ENCODE measurements at regions of chr1 and their contacts with region 1.

Region 1: GRCh38 chr1:165768513-165769394 is at the start of gene TMCO1:
- DNase-seq: peak; percentile 98
- H3K4me3 Mint-ChIP-seq: peak within 1 kb of the TSS; percentile 98
- H3K27ac Mint-ChIP-seq: peak within 1 kb of the TSS; percentile 100
- H3K4me1 Mint-ChIP-seq: peaks cover 41% of the 10 kb centered on the region
- H3K27me3 Mint-ChIP-seq: no peaks in the 10 kb centered on the region
- total RNA-seq, gene TMCO1: 91.8 and 94.3 TPM in 2 replicates

Region 2: GRCh38 chr1:165697881-165698760 is 70.6 kb before region 1 on chr1 and contains the start of gene ALDH9A1:
- intact Hi-C with region 1: loop called (anchors 2 kb)
- DNase-seq: peak; percentile 96
- H3K4me3 Mint-ChIP-seq: peak within 1 kb of the TSS; percentile 91
- H3K27ac Mint-ChIP-seq: peak within 1 kb of the TSS; percentile 96
- H3K4me1 Mint-ChIP-seq: peaks cover 21% of the 10 kb centered on the region
- H3K27me3 Mint-ChIP-seq: peaks cover 2% of the 10 kb centered on the region
- total RNA-seq, gene ALDH9A1: 41.8 and 43.8 TPM in 2 replicates

Region 3: DNA sequence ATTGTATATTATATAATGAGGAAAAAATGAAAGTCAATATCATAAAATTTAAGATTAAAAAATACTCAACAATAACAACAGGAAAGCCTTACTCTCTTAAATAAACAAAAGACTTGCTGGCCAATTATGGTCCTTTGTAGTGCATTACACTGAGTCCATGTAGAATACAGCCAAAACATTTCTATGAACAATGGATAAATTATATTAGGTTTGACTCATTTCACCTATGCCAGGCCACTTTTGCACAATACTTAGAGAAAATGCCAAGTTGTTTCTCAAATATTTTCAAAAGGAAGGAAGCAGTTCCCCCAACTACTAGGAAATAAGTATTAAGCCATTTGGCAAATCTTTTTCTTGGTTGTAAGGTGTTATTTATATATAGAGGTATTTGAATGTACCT is 38.9 kb after region 1 on chr1:
- intact Hi-C with region 1: no loop called
- DNase-seq: no peak
- H3K4me3 Mint-ChIP-seq: no peak overlapping the region
- H3K27ac Mint-ChIP-seq: no peak overlapping the region
- H3K4me1 Mint-ChIP-seq: no peaks in the 10 kb centered on the region
- H3K27me3 Mint-ChIP-seq: peaks cover 26% of the 10 kb centered on the region